GM12878 (cell line): ENCODE measurements at regions of chr10 and their contacts with region 1.

Region 1: GRCh38 chr10:109883859-109884771 is 39.2 kb downstream of the XPNPEP1 start:
- DNase-seq: no peak
- ATAC-seq: peak; percentile 87
- H3K4me3 ChIP-seq: no peak overlapping the region
- H3K27ac ChIP-seq: no peak overlapping the region
- H3K4me1 ChIP-seq: peaks cover 15% of the 10 kb centered on the region
- H3K27me3 ChIP-seq: no peaks in the 10 kb centered on the region
- CTCF ChIP-seq: peak; percentile 93 to 95 (median 94); a peak in 5 of 6 replicates
- EP300 ChIP-seq: no peak
- POLR2A ChIP-seq: no peak
- RAD21 ChIP-seq: peak; percentile 96

Region 2: DNA sequence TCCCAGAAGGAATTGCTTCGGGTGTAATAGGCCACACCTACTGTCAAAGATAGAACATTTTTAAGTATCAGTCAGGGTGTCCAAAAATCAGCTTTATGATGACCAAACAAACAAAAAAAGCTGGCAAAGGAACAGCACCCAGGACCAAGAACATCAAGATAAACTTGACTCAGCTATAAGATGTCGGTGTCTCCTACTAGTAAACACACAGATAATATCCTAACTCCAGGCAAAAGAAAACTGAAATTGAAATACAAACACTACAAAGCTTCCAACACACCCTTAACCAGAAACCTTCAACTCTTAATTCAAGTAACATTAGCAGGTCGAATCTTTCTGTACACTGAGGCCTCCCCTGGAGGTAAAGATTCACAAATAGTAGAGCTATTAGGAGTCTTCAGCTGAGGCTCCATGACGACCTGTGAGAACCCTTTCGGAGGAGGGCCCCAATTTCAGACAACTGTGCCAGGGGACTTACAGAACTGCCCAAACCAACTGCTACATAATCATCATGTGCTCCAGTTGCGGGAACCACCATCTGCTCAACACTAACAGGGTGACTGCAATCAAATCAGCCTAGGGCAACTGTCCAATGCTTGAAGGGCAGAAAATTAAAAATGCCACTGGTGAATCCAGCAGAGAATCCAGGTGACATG is 18.9 kb after region 1 on chr10:
- CTCF ChIA-PET with region 1: interaction called, 20 read pairs
- POLR2A ChIA-PET with region 1: interaction called, 4 read pairs
- RAD21 ChIA-PET with region 1: interaction called, 4 read pairs
- SMC1A ChIA-PET with region 1: interaction called, 9 read pairs
- in situ Hi-C with region 1: no loop called
- intact Hi-C with region 1: no loop called
- DNase-seq: no peak
- ATAC-seq: peak; percentile 89
- H3K4me3 ChIP-seq: no peak overlapping the region
- H3K27ac ChIP-seq: peak overlapping the region; percentile 50; the same call in 1 of the 2 replicates
- H3K4me1 ChIP-seq: peaks cover 6% of the 10 kb centered on the region
- H3K27me3 ChIP-seq: no peaks in the 10 kb centered on the region
- CTCF ChIP-seq: no peak
- EP300 ChIP-seq: no peak
- POLR2A ChIP-seq: no peak
- RAD21 ChIP-seq: no peak

Region 3: GRCh38 chr10:109966961-109967738 is 83.0 kb after region 1 on chr10:
- CTCF ChIA-PET with region 1: interaction called, 5 read pairs
- POLR2A ChIA-PET with region 1: no interaction called
- RAD21 ChIA-PET with region 1: interaction called, 11 read pairs
- SMC1A ChIA-PET with region 1: interaction called, 3 read pairs
- in situ Hi-C with region 1: no loop called
- intact Hi-C with region 1: no loop called
- DNase-seq: no peak
- ATAC-seq: no peak
- H3K4me3 ChIP-seq: no peak overlapping the region
- H3K27ac ChIP-seq: no peak overlapping the region
- H3K4me1 ChIP-seq: no peaks in the 10 kb centered on the region
- H3K27me3 ChIP-seq: no peaks in the 10 kb centered on the region; a peak in 2 of 4 replicates
- CTCF ChIP-seq: no peak
- EP300 ChIP-seq: no peak
- POLR2A ChIP-seq: no peak
- RAD21 ChIP-seq: no peak

Region 4: DNA sequence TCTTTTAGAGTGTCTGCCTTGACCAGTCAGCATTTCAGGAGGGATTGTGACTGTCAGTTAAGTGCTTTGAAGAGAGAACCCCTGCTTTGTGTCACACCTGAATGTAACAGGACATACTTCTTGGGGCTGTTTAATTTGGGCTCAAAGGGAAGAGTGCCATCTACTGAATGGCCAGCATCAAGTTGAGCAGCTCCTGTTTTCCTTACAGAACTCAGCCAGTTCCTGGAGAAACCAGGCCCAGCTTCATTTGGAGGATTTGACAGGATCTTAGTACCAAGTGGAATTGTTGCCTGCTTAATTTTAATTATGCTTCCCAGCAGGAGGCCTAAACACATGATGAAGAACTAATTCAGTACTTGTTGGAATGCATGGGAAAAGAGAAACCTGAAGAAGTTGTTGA is 131.9 kb after region 1 on chr10:
- CTCF ChIA-PET with region 1: interaction called, 31 read pairs
- POLR2A ChIA-PET with region 1: no interaction called
- RAD21 ChIA-PET with region 1: interaction called, 15 read pairs
- SMC1A ChIA-PET with region 1: interaction called, 32 read pairs
- in situ Hi-C with region 1: no loop called
- intact Hi-C with region 1: no loop called
- DNase-seq: no peak
- ATAC-seq: peak; percentile 65
- H3K4me3 ChIP-seq: no peak overlapping the region
- H3K27ac ChIP-seq: no peak overlapping the region
- H3K4me1 ChIP-seq: peaks cover 14% of the 10 kb centered on the region
- H3K27me3 ChIP-seq: no peaks in the 10 kb centered on the region
- CTCF ChIP-seq: peak; percentile 14 to 59 (median 33); a peak in 2 of 6 replicates
- EP300 ChIP-seq: no peak
- POLR2A ChIP-seq: no peak
- RAD21 ChIP-seq: peak; percentile 46

Region 5: DNA sequence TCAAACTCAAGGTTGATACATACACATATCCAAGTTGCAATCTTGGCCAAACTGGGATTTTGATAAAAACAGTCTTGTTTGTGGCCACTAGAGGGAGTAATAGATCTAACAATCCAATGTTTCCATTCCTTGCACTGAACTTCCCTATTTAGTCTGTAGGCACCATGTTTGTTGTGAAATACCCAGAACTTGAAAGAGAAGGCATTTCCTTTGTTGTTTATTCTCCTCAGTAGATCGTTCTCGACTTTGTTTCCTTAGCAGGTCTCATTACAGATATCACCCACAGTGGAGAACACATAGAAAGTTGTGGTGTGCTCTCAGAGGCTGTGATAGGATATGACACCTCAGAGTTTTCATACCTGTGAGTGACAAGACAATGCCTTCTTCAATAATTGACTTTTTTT is 253.0 kb after region 1 on chr10:
- CTCF ChIA-PET with region 1: interaction called, 13 read pairs
- POLR2A ChIA-PET with region 1: no interaction called
- RAD21 ChIA-PET with region 1: interaction called, 4 read pairs
- SMC1A ChIA-PET with region 1: interaction called, 4 read pairs
- in situ Hi-C with region 1: no loop called
- intact Hi-C with region 1: loop called (anchors 1 kb)
- DNase-seq: peak; percentile 48
- ATAC-seq: peak; percentile 83
- H3K4me3 ChIP-seq: no peak overlapping the region
- H3K27ac ChIP-seq: no peak overlapping the region
- H3K4me1 ChIP-seq: peaks cover 5% of the 10 kb centered on the region
- H3K27me3 ChIP-seq: no peaks in the 10 kb centered on the region; a peak in 1 of 4 replicates
- CTCF ChIP-seq: peak; percentile 57 to 79 (median 72)
- EP300 ChIP-seq: no peak
- POLR2A ChIP-seq: no peak
- RAD21 ChIP-seq: peak; percentile 89

Region 6: GRCh38 chr10:110285501-110285900 is 401.4 kb after region 1 on chr10:
- CTCF ChIA-PET with region 1: interaction called, 4 read pairs
- POLR2A ChIA-PET with region 1: no interaction called
- RAD21 ChIA-PET with region 1: no interaction called
- SMC1A ChIA-PET with region 1: interaction called, 3 read pairs
- in situ Hi-C with region 1: no loop called
- intact Hi-C with region 1: loop called (anchors 5 kb)
- DNase-seq: no peak
- ATAC-seq: no peak; the same call in 2 of the 3 replicates
- H3K4me3 ChIP-seq: no peak overlapping the region
- H3K27ac ChIP-seq: no peak overlapping the region
- H3K4me1 ChIP-seq: no peaks in the 10 kb centered on the region
- H3K27me3 ChIP-seq: no peaks in the 10 kb centered on the region
- CTCF ChIP-seq: no peak
- EP300 ChIP-seq: no peak
- POLR2A ChIP-seq: no peak
- RAD21 ChIP-seq: no peak